SK-N-SH (cell line): ENCODE measurements at regions of chr17 and their contacts with region 1.

Region 1: GRCh38 chr17:74961657-74962490 is 10.7 kb downstream of the HID1 start:
- DNase-seq: peak; percentile 96
- H3K4me3 ChIP-seq: no peak overlapping the region
- H3K27ac ChIP-seq: no peak overlapping the region; a peak in 1 of 4 replicates
- H3K4me1 ChIP-seq: no peaks in the 10 kb centered on the region; a peak in 1 of 4 replicates
- H3K27me3 ChIP-seq: no peaks in the 10 kb centered on the region
- CTCF ChIP-seq: peak; percentile 91
- EP300 ChIP-seq: no peak
- RAD21 ChIP-seq: peak; percentile 95

Region 2: GRCh38 chr17:74864866-74865395 is 96.9 kb before region 1 on chr17:
- CTCF ChIA-PET with region 1: interaction called, 20 read pairs
- POLR2A ChIA-PET with region 1: no interaction called
- DNase-seq: peak; percentile 93
- H3K4me3 ChIP-seq: no peak overlapping the region; a peak in 1 of 4 replicates
- H3K27ac ChIP-seq: no peak overlapping the region
- H3K4me1 ChIP-seq: peaks cover 0 to 10% of the 10 kb centered on the region in 2 experiments; a peak in 2 of 4 replicates
- H3K27me3 ChIP-seq: peaks cover 18% of the 10 kb centered on the region
- CTCF ChIP-seq: peak; percentile 99
- EP300 ChIP-seq: no peak
- RAD21 ChIP-seq: peak; percentile 99

Region 3: GRCh38 chr17:74945543-74945942 is 16.3 kb before region 1 on chr17:
- CTCF ChIA-PET with region 1: interaction called, 61 read pairs
- POLR2A ChIA-PET with region 1: interaction called, 5 read pairs
- DNase-seq: no peak
- H3K4me3 ChIP-seq: no peak overlapping the region
- H3K27ac ChIP-seq: no peak overlapping the region
- H3K4me1 ChIP-seq: no peaks in the 10 kb centered on the region
- H3K27me3 ChIP-seq: peaks cover 80% of the 10 kb centered on the region
- CTCF ChIP-seq: no peak
- EP300 ChIP-seq: no peak
- RAD21 ChIP-seq: no peak

Region 4: GRCh38 chr17:75012346-75013091 is 50.6 kb after region 1 on chr17 and contains the start of gene MRPL58:
- CTCF ChIA-PET with region 1: interaction called, 295 read pairs
- POLR2A ChIA-PET with region 1: interaction called, 49 read pairs
- DNase-seq: peak; percentile 96
- H3K4me3 ChIP-seq: peak within 1 kb of the TSS; percentile 65 to 77
- H3K27ac ChIP-seq: peak within 1 kb of the TSS; percentile 88 to 95
- H3K4me1 ChIP-seq: peaks cover 17 to 26% of the 10 kb centered on the region in 2 experiments; a peak in 3 of 4 replicates
- H3K27me3 ChIP-seq: no peaks in the 10 kb centered on the region
- CTCF ChIP-seq: peak; percentile 59
- EP300 ChIP-seq: peak; percentile 11 to 37; a peak in 2 of 4 replicates
- RAD21 ChIP-seq: peak; percentile 50
- polyA plus RNA-seq, gene MRPL58: 87.3 and 89.2 TPM in 2 replicates

Region 5: GRCh38 chr17:75046582-75047289 is 84.9 kb after region 1 on chr17 and contains the starts of genes ATP5PD and KCTD2:
- CTCF ChIA-PET with region 1: interaction called, 14 read pairs
- POLR2A ChIA-PET with region 1: interaction called, 3 read pairs
- DNase-seq: peak; percentile 100
- H3K4me3 ChIP-seq: peak within 1 kb of the TSS; percentile 92 to 97
- H3K27ac ChIP-seq: peak within 1 kb of the TSS; percentile 90 to 92
- H3K4me1 ChIP-seq: peaks cover 7 to 15% of the 10 kb centered on the region in 2 experiments; a peak in 2 of 4 replicates
- H3K27me3 ChIP-seq: no peaks in the 10 kb centered on the region
- CTCF ChIP-seq: no peak
- EP300 ChIP-seq: no peak; a peak in 1 of 4 replicates
- RAD21 ChIP-seq: no peak
- polyA plus RNA-seq, gene ATP5PD: 354 and 454 TPM in 2 replicates
- polyA plus RNA-seq, gene KCTD2: 27.5 and 34.2 TPM in 2 replicates

Region 6: DNA sequence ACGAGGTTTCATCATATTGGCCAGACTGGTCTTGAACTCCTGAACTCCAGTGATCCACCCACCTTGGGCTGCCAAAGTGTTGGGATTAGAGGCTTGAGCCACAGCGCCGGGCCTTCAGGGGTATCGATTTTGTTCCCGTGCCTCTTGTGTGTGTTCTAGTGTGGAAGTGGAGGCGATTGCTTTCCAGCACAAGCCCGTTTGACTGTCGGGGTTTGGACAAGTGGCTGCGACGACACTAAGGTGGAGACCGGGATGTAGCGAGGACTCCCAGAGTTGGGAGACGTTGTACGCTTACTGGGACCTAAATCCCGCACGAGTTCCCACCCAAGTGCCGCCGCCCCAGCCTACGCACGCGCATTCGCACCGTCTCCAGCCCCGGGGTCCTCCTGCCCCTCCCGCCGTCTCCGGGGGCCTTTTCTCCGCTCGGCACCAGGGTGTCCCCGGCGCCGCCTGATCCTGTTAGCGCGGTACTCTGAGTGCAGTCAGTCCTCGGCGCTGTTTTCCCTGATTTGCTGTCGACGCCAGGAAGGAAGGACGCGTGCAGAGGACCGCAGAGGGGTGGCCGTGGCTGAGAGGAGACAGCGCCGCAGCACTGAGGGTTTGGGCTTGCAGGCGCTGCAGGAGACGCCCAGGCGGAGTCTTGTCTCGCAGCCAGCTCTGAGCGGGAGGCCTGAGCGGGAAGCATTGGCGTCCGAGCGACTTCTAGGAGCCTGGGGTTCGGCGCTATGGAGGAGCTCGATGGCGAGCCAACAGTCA is 243.3 kb after region 1 on chr17 and contains the start of gene NUP85:
- CTCF ChIA-PET with region 1: interaction called, 14 read pairs
- POLR2A ChIA-PET with region 1: no interaction called
- DNase-seq: peak; percentile 100
- H3K4me3 ChIP-seq: peak within 1 kb of the TSS; percentile 70 to 87
- H3K27ac ChIP-seq: peak within 1 kb of the TSS; percentile 97 to 98
- H3K4me1 ChIP-seq: peaks cover 4 to 6% of the 10 kb centered on the region in 2 experiments; a peak in 1 of 4 replicates
- H3K27me3 ChIP-seq: no peaks in the 10 kb centered on the region
- CTCF ChIP-seq: no peak
- EP300 ChIP-seq: no peak
- RAD21 ChIP-seq: no peak
- polyA plus RNA-seq, gene NUP85: 80.5 and 99.8 TPM in 2 replicates